K562 (cell line): ENCODE measurements at regions of chr4 and their contacts with region 1.

Region 1: GRCh38 chr4:168183717-168184608 is 91.6 kb downstream of the ANXA10 start:
- DNase-seq: peak in 3 of 4 experiments; percentile 10 to 36 (median 11)
- ATAC-seq: no peak
- H3K4me3 ChIP-seq: no peak overlapping the region
- H3K27ac ChIP-seq: no peak overlapping the region
- H3K4me1 ChIP-seq: no peaks in the 10 kb centered on the region
- H3K27me3 ChIP-seq: no peaks in the 10 kb centered on the region
- CTCF ChIP-seq: peak in 2 of 3 experiments; percentile 17 to 54; a peak in 2 of 6 replicates
- EP300 ChIP-seq: no peak
- POLR2A ChIP-seq: no peak
- RAD21 ChIP-seq: peak; percentile 78 to 82

Region 2: GRCh38 chr4:168374772-168375523 is 191.0 kb after region 1 on chr4:
- CTCF ChIA-PET with region 1: no interaction called
- POLR2A ChIA-PET with region 1: no interaction called
- in situ Hi-C with region 1: no loop called
- intact Hi-C with region 1: no loop called
- DNase-seq: no peak
- ATAC-seq: no peak
- H3K4me3 ChIP-seq: no peak overlapping the region
- H3K27ac ChIP-seq: no peak overlapping the region
- H3K4me1 ChIP-seq: no peaks in the 10 kb centered on the region
- H3K27me3 ChIP-seq: no peaks in the 10 kb centered on the region
- CTCF ChIP-seq: no peak
- EP300 ChIP-seq: no peak
- POLR2A ChIP-seq: no peak
- RAD21 ChIP-seq: no peak

Region 3: DNA sequence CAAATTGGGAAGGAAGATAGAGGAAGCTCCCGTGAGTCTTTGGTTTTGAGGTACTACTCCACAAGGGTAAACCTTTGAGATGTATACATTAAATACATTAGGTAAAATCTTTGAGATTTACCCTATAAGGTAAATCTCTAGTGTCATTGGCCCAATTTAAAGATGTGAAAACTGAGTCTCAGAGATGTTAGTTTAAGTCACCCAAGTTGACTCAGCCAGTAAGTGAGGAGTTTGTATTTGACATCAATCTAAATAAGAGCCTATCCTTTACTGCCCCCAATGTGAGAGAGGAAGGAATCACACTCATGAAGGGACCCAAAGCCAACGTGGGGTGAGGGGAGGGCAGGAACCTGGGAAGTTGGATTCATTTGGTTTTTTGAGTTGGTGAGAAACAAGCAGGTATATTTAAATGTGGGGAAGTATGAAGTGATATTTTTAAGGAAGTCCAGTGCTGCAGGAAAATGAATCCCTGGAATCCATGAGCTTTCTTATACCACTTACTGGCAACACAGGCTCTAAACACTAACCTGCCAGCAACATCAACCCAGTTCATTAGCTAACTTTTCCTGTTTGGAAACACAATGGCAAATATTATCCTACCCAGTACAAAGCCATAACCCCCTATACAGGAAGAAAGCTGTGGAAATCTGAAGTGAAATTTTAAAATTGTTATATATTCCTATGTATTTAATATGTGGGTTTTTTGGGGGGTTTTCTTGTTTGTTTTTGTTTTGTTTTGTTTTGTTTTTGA is 368.2 kb after region 1 on chr4:
- CTCF ChIA-PET with region 1: no interaction called
- POLR2A ChIA-PET with region 1: no interaction called
- in situ Hi-C with region 1: no loop called
- intact Hi-C with region 1: loop called (anchors 1 kb)
- DNase-seq: peak in 2 of 4 experiments; percentile 16 to 19
- ATAC-seq: peak; percentile 79
- H3K4me3 ChIP-seq: no peak overlapping the region
- H3K27ac ChIP-seq: no peak overlapping the region
- H3K4me1 ChIP-seq: no peaks in the 10 kb centered on the region
- H3K27me3 ChIP-seq: no peaks in the 10 kb centered on the region; a peak in 1 of 5 replicates
- CTCF ChIP-seq: peak; percentile 11 to 44 (median 32); a peak in 3 of 6 replicates
- EP300 ChIP-seq: no peak
- POLR2A ChIP-seq: no peak
- RAD21 ChIP-seq: peak; percentile 56 to 69